OCI-LY7 (cell line): ENCODE measurements at regions of chr6 and their contacts with region 1.

Region 1: GRCh38 chr6:4901386-4902061 is 102.3 kb downstream of the RPP40 start:
- DNase-seq: peak; percentile 8
- H3K4me3 ChIP-seq: peak overlapping the region; percentile 15
- H3K27ac ChIP-seq: peak overlapping the region; percentile 16
- H3K4me1 ChIP-seq: peaks cover 42% of the 10 kb centered on the region
- CTCF ChIP-seq: no peak

Region 2: GRCh38 chr6:4889701-4890100 is 11.8 kb before region 1 on chr6:
- CTCF ChIA-PET with region 1: interaction called, 3 read pairs
- POLR2A ChIA-PET with region 1: interaction called, 10 read pairs
- intact Hi-C with region 1: no loop called
- DNase-seq: no peak
- H3K4me3 ChIP-seq: no peak overlapping the region
- H3K27ac ChIP-seq: no peak overlapping the region
- H3K4me1 ChIP-seq: peaks cover 43% of the 10 kb centered on the region
- CTCF ChIP-seq: no peak

Region 3: DNA sequence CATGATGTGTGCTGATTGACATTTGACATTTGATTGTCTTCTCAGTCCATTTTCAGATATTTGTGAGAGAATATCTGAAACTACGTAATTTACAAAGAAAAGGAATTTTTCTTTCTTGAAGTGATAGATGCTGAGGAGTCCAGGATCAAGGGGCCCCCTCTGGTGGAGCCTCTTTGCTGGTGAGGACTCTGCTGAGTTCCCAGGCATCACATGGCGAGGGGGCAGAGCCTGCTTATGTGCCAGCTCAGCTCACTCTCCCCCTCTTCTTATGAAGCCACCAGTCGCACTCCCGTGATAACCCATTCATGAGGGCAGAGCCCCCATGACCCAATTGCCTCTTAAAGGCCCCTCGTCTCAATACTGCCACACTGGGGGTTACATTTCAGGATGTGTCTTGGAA is 11.0 kb after region 1 on chr6:
- CTCF ChIA-PET with region 1: no interaction called
- POLR2A ChIA-PET with region 1: no interaction called
- intact Hi-C with region 1: no loop called
- DNase-seq: no peak
- H3K4me3 ChIP-seq: no peak overlapping the region
- H3K27ac ChIP-seq: no peak overlapping the region
- H3K4me1 ChIP-seq: peaks cover 13% of the 10 kb centered on the region
- CTCF ChIP-seq: no peak

Region 4: DNA sequence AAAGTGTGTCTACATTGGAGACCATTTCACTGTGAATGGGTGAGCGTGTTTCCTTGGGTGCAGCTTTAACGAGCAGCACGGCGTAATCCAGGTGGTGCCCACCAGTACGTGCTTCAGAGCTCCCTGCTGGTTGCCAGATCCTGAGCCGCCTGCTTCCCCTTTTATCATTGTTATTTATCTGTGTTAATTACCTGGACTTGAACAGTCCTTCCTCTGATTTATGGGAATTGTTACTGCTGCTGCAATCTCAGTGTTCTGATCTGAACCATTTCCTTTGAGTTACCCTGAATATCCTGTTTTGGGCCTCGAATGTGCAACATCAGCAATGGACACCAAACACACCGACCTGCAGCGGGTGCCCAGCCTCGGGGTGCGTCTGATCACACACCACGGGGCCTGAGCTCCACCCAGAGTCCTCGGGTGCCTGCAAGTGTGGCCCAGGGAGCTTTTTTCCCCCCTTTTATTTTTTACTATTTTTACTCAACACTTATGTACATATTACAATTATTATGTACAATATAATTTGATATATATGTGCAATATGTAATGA is 21.0 kb after region 1 on chr6:
- CTCF ChIA-PET with region 1: no interaction called
- POLR2A ChIA-PET with region 1: interaction called, 9 read pairs
- intact Hi-C with region 1: loop called (anchors 2 kb)
- DNase-seq: no peak
- H3K4me3 ChIP-seq: no peak overlapping the region
- H3K27ac ChIP-seq: no peak overlapping the region
- H3K4me1 ChIP-seq: no peaks in the 10 kb centered on the region
- CTCF ChIP-seq: no peak